CD4-positive, alpha-beta T cell (primary cell): ENCODE measurements at regions of chr12 and their contacts with region 1.

Region 1: DNA sequence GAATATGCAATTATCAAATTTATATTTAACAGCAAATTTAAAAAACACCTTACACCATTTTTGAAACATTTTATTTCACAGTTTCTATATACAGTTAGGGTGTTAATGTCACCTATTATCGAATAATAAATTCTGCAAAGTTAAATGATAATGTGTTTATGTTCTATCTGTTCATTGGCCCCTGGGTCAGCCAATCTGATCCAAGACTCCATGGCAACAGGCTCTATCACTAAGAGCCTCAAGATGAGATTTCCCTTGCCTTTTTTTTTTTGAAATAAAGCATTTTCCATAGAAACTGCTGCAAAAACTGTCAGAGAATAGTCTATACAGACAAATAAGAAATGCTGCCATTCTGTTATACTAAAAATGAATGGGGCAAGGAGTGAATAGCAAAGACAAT is 83.2 kb upstream of the STAC3 start:
- DNase-seq: no peak
- ATAC-seq: no peak
- H3K4me3 ChIP-seq: no peak overlapping the region
- H3K4me3 Mint-ChIP-seq: no peak overlapping the region
- H3K27ac ChIP-seq: no peak overlapping the region
- H3K27ac Mint-ChIP-seq: no peak overlapping the region
- H3K4me1 ChIP-seq: no peaks in the 10 kb centered on the region
- H3K4me1 Mint-ChIP-seq: peaks cover 6% of the 10 kb centered on the region
- H3K27me3 ChIP-seq: no peaks in the 10 kb centered on the region
- H3K27me3 Mint-ChIP-seq: no peaks in the 10 kb centered on the region
- CTCF ChIP-seq: no peak

Region 2: GRCh38 chr12:57309420-57309819 is 24.8 kb before region 1 on chr12:
- CTCF ChIA-PET with region 1: no interaction called
- POLR2A ChIA-PET with region 1: no interaction called
- intact Hi-C with region 1: loop called in 1 of 2 experiments (anchors 2 kb)
- DNase-seq: no peak
- ATAC-seq: no peak
- H3K4me3 ChIP-seq: no peak overlapping the region
- H3K4me3 Mint-ChIP-seq: no peak overlapping the region
- H3K27ac ChIP-seq: no peak overlapping the region
- H3K27ac Mint-ChIP-seq: no peak overlapping the region
- H3K4me1 ChIP-seq: no peaks in the 10 kb centered on the region
- H3K4me1 Mint-ChIP-seq: no peaks in the 10 kb centered on the region
- H3K27me3 ChIP-seq: no peaks in the 10 kb centered on the region
- H3K27me3 Mint-ChIP-seq: no peaks in the 10 kb centered on the region
- CTCF ChIP-seq: no peak

Region 3: GRCh38 chr12:57918147-57918546 is 583.9 kb after region 1 on chr12:
- CTCF ChIA-PET with region 1: no interaction called
- POLR2A ChIA-PET with region 1: no interaction called
- intact Hi-C with region 1: no loop called
- DNase-seq: no peak
- ATAC-seq: no peak
- H3K4me3 ChIP-seq: no peak overlapping the region
- H3K4me3 Mint-ChIP-seq: no peak overlapping the region
- H3K27ac ChIP-seq: no peak overlapping the region
- H3K27ac Mint-ChIP-seq: no peak overlapping the region
- H3K4me1 ChIP-seq: no peaks in the 10 kb centered on the region
- H3K4me1 Mint-ChIP-seq: no peaks in the 10 kb centered on the region
- H3K27me3 ChIP-seq: peaks cover 0 to 2% of the 10 kb centered on the region in 2 experiments
- H3K27me3 Mint-ChIP-seq: no peaks in the 10 kb centered on the region
- CTCF ChIP-seq: no peak